Endothelial cell of umbilical vein (primary cell): ENCODE measurements at regions of chr13 and their contacts with region 1.

Region 1: DNA sequence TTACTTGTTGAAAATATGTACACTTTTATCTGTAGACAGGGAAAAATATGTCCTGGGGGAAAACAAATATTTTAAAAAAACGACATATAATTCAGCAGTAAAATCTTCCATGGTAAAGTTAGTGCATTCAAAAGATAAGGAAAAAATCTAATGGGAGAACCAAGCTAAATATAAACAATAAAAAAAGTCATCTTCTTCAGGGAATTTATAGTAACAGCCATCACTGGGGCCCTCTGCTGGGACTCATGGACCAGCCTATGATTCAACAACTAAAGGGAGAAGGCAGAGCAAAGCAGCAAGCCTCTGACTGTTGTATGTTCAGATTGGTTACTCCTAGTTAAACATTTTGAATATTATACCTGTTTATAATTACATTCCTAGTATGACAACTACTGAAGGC is 93.0 kb downstream of the ITGBL1 start:
- DNase-seq: no peak
- H3K4me3 ChIP-seq: no peak overlapping the region
- H3K27ac ChIP-seq: no peak overlapping the region
- H3K4me1 ChIP-seq: no peaks in the 10 kb centered on the region
- H3K27me3 ChIP-seq: no peaks in the 10 kb centered on the region
- CTCF ChIP-seq: no peak
- POLR2A ChIP-seq: no peak

Region 2: GRCh38 chr13:101535192-101535746 is 10.3 kb before region 1 on chr13:
- CTCF ChIA-PET with region 1: interaction called, 3 read pairs
- POLR2A ChIA-PET with region 1: no interaction called
- dilution Hi-C with region 1: no loop called
- intact Hi-C with region 1: loop called (anchors 1 kb)
- DNase-seq: no peak
- H3K4me3 ChIP-seq: no peak overlapping the region
- H3K27ac ChIP-seq: no peak overlapping the region
- H3K4me1 ChIP-seq: peaks cover 37% of the 10 kb centered on the region
- H3K27me3 ChIP-seq: no peaks in the 10 kb centered on the region
- CTCF ChIP-seq: no peak
- POLR2A ChIP-seq: no peak